CD4-positive, alpha-beta T cell (primary cell): ENCODE measurements at regions of chr15 and their contacts with region 1.

Region 1: GRCh38 chr15:29114221-29115092 is 155.2 kb downstream of the NSMCE3 start:
- DNase-seq: no peak
- ATAC-seq: peak; percentile 22
- H3K4me3 ChIP-seq: no peak overlapping the region
- H3K4me3 Mint-ChIP-seq: peak overlapping the region; percentile 58
- H3K27ac ChIP-seq: no peak overlapping the region
- H3K27ac Mint-ChIP-seq: peak overlapping the region; percentile 24
- H3K4me1 ChIP-seq: peaks cover 19% of the 10 kb centered on the region
- H3K4me1 Mint-ChIP-seq: peaks cover 13% of the 10 kb centered on the region
- H3K27me3 ChIP-seq: no peaks in the 10 kb centered on the region
- H3K27me3 Mint-ChIP-seq: no peaks in the 10 kb centered on the region
- CTCF ChIP-seq: no peak

Region 2: DNA sequence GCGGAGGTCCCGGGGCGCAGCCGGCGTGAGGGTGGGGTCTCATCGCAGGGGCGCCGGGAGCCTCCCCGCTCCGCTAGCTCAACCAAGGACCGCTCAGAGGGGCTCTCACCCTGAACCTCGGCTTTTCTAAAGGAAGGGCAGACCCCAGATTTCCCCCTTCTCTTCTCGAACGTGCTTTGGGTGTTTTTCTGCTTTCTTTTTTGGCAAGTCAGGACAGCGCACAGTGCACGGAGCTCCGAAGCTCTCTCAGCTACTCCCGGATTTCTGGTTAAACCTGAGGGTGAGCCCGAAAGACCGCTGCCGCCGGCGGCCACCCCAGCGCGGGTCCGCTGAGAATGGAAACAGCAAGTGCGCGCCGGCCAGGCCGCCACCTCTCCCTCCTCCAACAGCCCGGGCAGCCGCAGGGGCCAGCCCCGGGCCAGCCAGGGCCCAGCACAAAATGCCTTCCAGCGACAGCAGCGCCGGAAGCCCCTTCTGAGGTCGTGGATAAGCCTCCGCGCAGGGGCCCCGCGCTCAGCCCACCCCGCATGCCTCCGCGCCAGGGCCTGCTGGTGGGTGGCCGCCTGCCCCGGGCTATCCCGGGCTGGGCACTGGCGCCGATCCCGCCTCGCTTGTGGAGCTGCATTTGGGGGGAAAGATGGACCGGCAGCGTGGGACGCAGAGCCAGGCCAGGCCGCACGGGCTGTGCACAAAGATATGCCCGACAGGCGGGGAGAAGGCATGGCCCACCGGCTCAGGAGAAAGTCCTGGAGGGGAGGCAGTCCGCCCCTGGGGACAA is 1007.2 kb before region 1 on chr15:
- CTCF ChIA-PET with region 1: no interaction called
- POLR2A ChIA-PET with region 1: no interaction called
- intact Hi-C with region 1: loop called in 1 of 2 experiments (anchors 5 kb)
- DNase-seq: peak in 2 of 14 experiments; percentile 28 to 42
- ATAC-seq: peak; percentile 52
- H3K4me3 ChIP-seq: peak overlapping the region; percentile 55
- H3K4me3 Mint-ChIP-seq: peak overlapping the region; percentile 91
- H3K27ac ChIP-seq: no peak overlapping the region
- H3K27ac Mint-ChIP-seq: no peak overlapping the region
- H3K4me1 ChIP-seq: peaks cover 20% of the 10 kb centered on the region
- H3K4me1 Mint-ChIP-seq: peaks cover 10% of the 10 kb centered on the region
- H3K27me3 ChIP-seq: peaks cover 15 to 28% of the 10 kb centered on the region in 2 experiments
- H3K27me3 Mint-ChIP-seq: peaks cover 25% of the 10 kb centered on the region
- CTCF ChIP-seq: no peak

Region 3: DNA sequence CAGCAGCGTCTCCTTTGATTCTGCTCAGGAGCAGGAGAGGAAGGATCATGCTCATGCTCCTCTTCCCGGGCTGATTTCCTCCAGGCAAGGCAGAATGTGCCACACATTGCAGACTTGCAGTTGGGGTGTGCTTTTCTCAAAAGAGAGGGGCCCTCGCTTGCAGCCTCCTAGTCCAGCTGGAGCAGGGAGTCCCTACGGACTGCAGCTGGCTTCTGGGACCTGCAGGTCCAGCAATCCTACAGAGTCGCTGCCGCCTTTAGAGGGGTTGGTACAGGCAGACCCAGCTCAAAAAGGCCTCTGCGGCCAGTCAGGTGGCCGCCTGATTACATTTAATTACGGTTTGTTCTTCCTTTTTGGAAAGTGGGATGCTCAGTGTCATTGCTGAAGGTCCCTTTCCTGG is 18.7 kb before region 1 on chr15:
- CTCF ChIA-PET with region 1: no interaction called
- POLR2A ChIA-PET with region 1: no interaction called
- intact Hi-C with region 1: no loop called
- DNase-seq: no peak
- ATAC-seq: no peak
- H3K4me3 ChIP-seq: no peak overlapping the region
- H3K4me3 Mint-ChIP-seq: no peak overlapping the region
- H3K27ac ChIP-seq: no peak overlapping the region
- H3K27ac Mint-ChIP-seq: no peak overlapping the region
- H3K4me1 ChIP-seq: no peaks in the 10 kb centered on the region
- H3K4me1 Mint-ChIP-seq: no peaks in the 10 kb centered on the region
- H3K27me3 ChIP-seq: no peaks in the 10 kb centered on the region
- H3K27me3 Mint-ChIP-seq: no peaks in the 10 kb centered on the region
- CTCF ChIP-seq: no peak

Region 4: DNA sequence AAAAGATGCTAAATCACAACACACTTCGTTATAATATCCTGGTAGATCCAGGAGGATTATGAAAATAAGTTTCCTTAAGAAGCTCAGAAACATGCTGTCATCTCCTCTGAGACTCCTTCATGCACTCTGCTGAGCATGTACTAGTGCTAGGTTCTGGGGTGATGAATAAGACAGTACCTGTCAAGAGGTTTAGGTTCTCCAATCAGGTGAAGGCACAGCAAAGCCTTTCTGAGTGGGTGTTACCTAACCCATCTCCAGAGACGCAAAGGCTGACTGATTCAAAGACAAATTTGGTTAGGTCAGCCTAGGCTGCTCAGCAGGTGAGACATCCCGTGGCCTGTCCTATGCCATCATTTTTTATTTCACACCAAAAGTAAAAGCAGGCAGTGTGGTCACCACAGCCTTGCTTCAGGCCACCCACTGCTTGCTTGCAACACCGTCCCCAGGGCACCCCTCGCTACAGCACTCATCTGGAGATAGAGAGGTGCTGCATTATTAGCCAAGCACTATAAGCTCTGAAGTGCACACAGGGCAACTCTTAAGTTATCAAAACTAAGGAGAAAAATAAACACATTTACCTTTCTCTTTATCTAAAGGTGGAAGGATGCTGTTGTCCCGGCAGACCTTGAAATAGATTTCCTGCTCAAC is 590.6 kb after region 1 on chr15:
- CTCF ChIA-PET with region 1: no interaction called
- POLR2A ChIA-PET with region 1: no interaction called
- intact Hi-C with region 1: no loop called
- DNase-seq: no peak
- ATAC-seq: no peak
- H3K4me3 ChIP-seq: no peak overlapping the region
- H3K4me3 Mint-ChIP-seq: no peak overlapping the region
- H3K27ac ChIP-seq: no peak overlapping the region
- H3K27ac Mint-ChIP-seq: no peak overlapping the region
- H3K4me1 ChIP-seq: no peaks in the 10 kb centered on the region
- H3K4me1 Mint-ChIP-seq: no peaks in the 10 kb centered on the region
- H3K27me3 ChIP-seq: peaks cover 0 to 4% of the 10 kb centered on the region in 2 experiments
- H3K27me3 Mint-ChIP-seq: peaks cover 16% of the 10 kb centered on the region
- CTCF ChIP-seq: no peak